HepG2 (cell line): ENCODE measurements at regions of chr5 and their contacts with region 1.

Region 1: DNA sequence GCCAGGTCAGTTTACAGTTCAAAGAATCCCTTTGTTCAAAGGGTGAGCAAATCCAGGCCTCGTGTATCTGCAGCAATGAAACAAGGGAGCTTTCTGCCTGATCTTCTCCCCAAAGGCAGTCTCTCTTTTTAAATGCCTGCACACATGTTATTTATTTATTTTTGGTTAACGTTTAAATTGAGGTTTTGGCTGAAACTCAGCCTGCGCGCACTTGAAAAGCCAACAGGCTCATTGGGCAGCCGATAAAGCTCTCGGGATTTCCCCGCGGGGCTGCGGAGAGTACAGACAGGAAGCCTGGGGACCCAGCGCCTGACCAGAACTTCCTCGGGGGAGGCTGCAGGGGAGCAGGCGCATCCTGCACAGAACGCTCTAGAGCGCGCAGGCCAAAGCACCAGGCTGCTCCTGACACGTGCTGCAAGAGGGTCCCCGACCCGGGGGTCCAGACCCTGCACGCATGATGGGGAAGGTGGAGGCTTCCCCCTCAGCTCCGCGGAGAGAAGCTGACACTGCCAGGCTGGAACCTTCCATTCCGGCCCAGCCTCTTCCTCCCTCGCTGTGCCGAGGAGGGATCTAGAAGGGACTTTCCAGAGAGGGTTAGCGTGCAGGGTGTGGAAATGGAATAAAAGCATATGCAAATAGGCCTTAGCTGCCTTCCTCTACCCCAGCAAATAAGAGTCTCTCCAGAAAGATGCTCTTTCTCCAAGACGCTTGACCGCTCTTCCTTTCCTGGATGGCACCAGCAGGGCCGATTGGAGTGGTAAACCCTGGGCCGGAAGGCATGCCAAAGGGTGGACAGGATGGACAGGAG is 46.1 kb downstream of the PTTG1 start:
- DNase-seq: peak; percentile 97
- ATAC-seq: peak; percentile 96
- H3K4me3 ChIP-seq: peak overlapping the region; percentile 75 to 85 (median 81)
- H3K27ac ChIP-seq: peak overlapping the region; percentile 89
- H3K4me1 ChIP-seq: peaks cover 85% of the 10 kb centered on the region
- H3K27me3 ChIP-seq: no peaks in the 10 kb centered on the region; a peak in 1 of 5 replicates
- CTCF ChIP-seq: no peak
- EP300 ChIP-seq: peak in 1 of 2 experiments; percentile 78; a peak in 2 of 4 replicates
- POLR2A ChIP-seq: peak; percentile 78 to 89
- RAD21 ChIP-seq: peak; percentile 21; the same call in 1 of the 2 replicates

Region 2: DNA sequence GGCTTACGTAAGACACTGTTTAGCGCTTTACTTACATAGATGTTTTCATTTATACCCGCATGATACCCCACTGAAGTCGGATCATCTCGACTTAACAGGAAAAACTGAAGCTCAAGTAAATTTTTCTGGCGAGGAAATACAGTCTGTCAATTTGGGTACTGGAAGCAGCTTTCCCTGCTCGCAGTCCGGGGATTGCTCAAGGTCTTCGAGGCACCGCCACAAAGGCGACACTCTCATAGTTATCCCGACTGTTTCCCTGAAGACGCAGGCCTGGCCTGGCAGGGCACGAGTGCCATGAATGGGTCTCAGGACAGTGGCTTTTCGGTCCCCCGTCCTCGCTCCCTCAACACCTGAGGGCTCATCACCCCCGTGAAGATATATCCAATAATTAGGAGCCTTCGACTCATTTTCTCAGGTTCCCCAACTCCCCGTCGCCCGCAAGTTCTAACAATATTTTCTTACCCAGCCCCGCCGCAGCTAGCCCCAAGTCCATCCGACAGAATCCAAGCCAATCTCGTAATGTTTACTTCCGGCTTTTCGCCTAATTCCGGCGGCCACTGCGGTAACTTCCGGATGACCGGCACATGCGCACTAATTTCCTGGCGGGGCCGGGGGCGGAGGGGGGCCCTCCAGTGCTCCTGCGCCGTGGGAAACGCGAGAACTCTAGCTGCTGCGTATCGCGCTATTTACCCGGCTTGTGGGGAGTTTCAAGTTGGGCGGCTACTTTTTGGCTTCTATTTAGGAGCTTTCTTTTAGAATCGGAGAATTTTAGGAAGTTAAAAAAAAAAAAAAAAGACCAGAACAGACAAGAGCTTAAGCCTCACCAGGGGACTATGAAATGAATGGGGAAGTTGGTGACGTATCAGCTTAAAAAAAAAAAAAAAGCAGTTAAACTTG is 49.0 kb before region 1 on chr5 and contains the start of gene SLU7:
- CTCF ChIA-PET with region 1: no interaction called
- POLR2A ChIA-PET with region 1: interaction called, 19 read pairs
- in situ Hi-C with region 1: no loop called
- intact Hi-C with region 1: loop called (anchors 2 kb)
- DNase-seq: peak; percentile 90
- ATAC-seq: peak; percentile 85
- H3K4me3 ChIP-seq: peak within 1 kb of the TSS; percentile 81 to 99 (median 96)
- H3K27ac ChIP-seq: peak within 1 kb of the TSS; percentile 80
- H3K4me1 ChIP-seq: peaks cover 47% of the 10 kb centered on the region
- H3K27me3 ChIP-seq: no peaks in the 10 kb centered on the region; a peak in 1 of 5 replicates
- CTCF ChIP-seq: no peak
- EP300 ChIP-seq: no peak
- POLR2A ChIP-seq: peak; percentile 66 to 80
- RAD21 ChIP-seq: 0 out of 2 replicates have a peak, but pooled peaks have one; percentile 13
- total RNA-seq, gene SLU7: 39.2 and 52.6 TPM in 2 replicates

Region 3: GRCh38 chr5:160432196-160432595 is 35.6 kb before region 1 on chr5:
- CTCF ChIA-PET with region 1: no interaction called
- POLR2A ChIA-PET with region 1: no interaction called
- in situ Hi-C with region 1: no loop called
- intact Hi-C with region 1: no loop called
- DNase-seq: no peak
- ATAC-seq: no peak
- H3K4me3 ChIP-seq: no peak overlapping the region
- H3K27ac ChIP-seq: no peak overlapping the region
- H3K4me1 ChIP-seq: peaks cover 33% of the 10 kb centered on the region
- H3K27me3 ChIP-seq: no peaks in the 10 kb centered on the region
- CTCF ChIP-seq: no peak
- EP300 ChIP-seq: no peak
- POLR2A ChIP-seq: no peak
- RAD21 ChIP-seq: no peak

Region 4: GRCh38 chr5:160479926-160480325 is 12.2 kb after region 1 on chr5:
- CTCF ChIA-PET with region 1: no interaction called
- POLR2A ChIA-PET with region 1: interaction called, 98 read pairs
- in situ Hi-C with region 1: no loop called
- intact Hi-C with region 1: loop called (anchors 1 kb)
- DNase-seq: no peak
- ATAC-seq: no peak
- H3K4me3 ChIP-seq: no peak overlapping the region
- H3K27ac ChIP-seq: no peak overlapping the region
- H3K4me1 ChIP-seq: peaks cover 80% of the 10 kb centered on the region
- H3K27me3 ChIP-seq: no peaks in the 10 kb centered on the region
- CTCF ChIP-seq: no peak
- EP300 ChIP-seq: no peak
- POLR2A ChIP-seq: no peak
- RAD21 ChIP-seq: no peak

Region 5: DNA sequence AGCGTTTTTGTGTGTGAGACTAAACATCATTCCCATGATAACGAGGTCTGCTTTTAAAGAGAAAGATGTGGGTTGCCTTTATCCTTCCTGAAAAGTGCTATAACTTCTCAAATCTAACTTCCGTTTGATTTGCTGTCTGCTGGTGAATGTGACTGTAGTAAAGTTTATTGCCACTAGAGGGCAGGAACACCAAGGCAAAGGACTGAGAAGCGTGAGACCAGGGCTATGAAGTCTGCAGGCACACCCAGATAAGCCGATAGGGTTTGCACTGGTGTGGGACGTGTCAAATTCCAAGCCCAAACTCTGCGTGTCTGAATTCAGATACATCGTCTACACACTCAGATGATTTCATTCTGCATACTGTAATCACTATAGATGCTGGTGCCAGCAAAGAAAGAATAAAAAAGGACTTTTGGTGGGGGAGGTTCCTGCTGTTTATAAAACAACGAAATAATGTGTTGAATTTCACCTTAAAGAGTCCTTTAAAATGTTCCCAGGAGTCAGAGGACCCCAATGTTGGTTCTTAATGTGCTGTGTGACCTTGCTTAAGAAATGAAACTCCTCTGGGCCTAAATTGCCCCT is 41.1 kb after region 1 on chr5:
- CTCF ChIA-PET with region 1: no interaction called
- POLR2A ChIA-PET with region 1: interaction called, 9 read pairs
- in situ Hi-C with region 1: no loop called
- intact Hi-C with region 1: loop called (anchors 2 kb)
- DNase-seq: peak; percentile 76
- ATAC-seq: peak; percentile 89
- H3K4me3 ChIP-seq: no peak overlapping the region
- H3K27ac ChIP-seq: no peak overlapping the region
- H3K4me1 ChIP-seq: peaks cover 52% of the 10 kb centered on the region
- H3K27me3 ChIP-seq: no peaks in the 10 kb centered on the region; a peak in 1 of 5 replicates
- CTCF ChIP-seq: peak; percentile 92
- EP300 ChIP-seq: no peak
- POLR2A ChIP-seq: no peak
- RAD21 ChIP-seq: peak; percentile 88

Region 6: GRCh38 chr5:160887777-160888176 is 420.0 kb after region 1 on chr5:
- CTCF ChIA-PET with region 1: no interaction called
- POLR2A ChIA-PET with region 1: interaction called, 4 read pairs
- in situ Hi-C with region 1: no loop called
- intact Hi-C with region 1: loop called (anchors 10 kb)
- DNase-seq: peak; percentile 95
- ATAC-seq: peak; percentile 96
- H3K4me3 ChIP-seq: no peak overlapping the region
- H3K27ac ChIP-seq: peak overlapping the region; percentile 61
- H3K4me1 ChIP-seq: peaks cover 47% of the 10 kb centered on the region
- H3K27me3 ChIP-seq: no peaks in the 10 kb centered on the region
- CTCF ChIP-seq: no peak
- EP300 ChIP-seq: peak; percentile 59 to 92; a peak in 3 of 4 replicates
- POLR2A ChIP-seq: no peak
- RAD21 ChIP-seq: no peak